ENCODE measurements at regions of chr2 and their contacts with region 1.

Region 1: DNA sequence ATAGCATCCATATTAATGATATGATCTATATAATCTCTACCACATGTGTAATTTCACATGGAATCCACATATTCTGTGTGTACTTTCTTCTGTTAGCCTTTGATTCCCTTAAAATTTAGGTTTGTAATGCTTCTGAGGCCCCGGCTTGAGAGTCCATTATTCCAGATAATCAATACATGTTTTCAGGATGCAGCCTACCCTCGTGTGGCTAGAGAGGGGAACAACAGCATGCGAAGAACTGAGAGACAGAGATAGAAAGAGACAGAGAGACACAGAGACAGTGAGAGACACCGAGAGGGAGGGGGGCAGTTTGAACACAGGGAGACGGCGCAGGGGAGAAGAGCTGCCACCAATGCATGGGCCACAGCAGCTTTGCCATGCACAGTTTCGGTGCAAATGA is 185.4 kb downstream of the SNTG2 start:
- DNase-seq: no peak
- H3K4me3 Mint-ChIP-seq: no peak overlapping the region
- H3K27ac Mint-ChIP-seq: no peak overlapping the region
- H3K4me1 Mint-ChIP-seq: peaks cover 36% of the 10 kb centered on the region
- H3K27me3 Mint-ChIP-seq: no peaks in the 10 kb centered on the region

Region 2: GRCh38 chr2:677056-677965 is 458.7 kb before region 1 on chr2 and contains the start of gene TMEM18:
- CTCF ChIA-PET with region 1: no interaction called
- intact Hi-C with region 1: loop called (anchors 10 kb)
- DNase-seq: peak; percentile 95
- H3K4me3 Mint-ChIP-seq: peak within 1 kb of the TSS; percentile 94
- H3K27ac Mint-ChIP-seq: peak within 1 kb of the TSS; percentile 97
- H3K4me1 Mint-ChIP-seq: peaks cover 44% of the 10 kb centered on the region
- H3K27me3 Mint-ChIP-seq: no peaks in the 10 kb centered on the region
- total RNA-seq, gene TMEM18: 22.4 to 25.1 TPM

Region 3: GRCh38 chr2:854460-854859 is 281.6 kb before region 1 on chr2:
- CTCF ChIA-PET with region 1: no interaction called
- intact Hi-C with region 1: loop called (anchors 2 kb)
- DNase-seq: peak; percentile 73
- H3K4me3 Mint-ChIP-seq: no peak overlapping the region
- H3K27ac Mint-ChIP-seq: no peak overlapping the region
- H3K4me1 Mint-ChIP-seq: peaks cover 19% of the 10 kb centered on the region
- H3K27me3 Mint-ChIP-seq: no peaks in the 10 kb centered on the region

Region 4: GRCh38 chr2:1115843-1116539 is 20.1 kb before region 1 on chr2:
- CTCF ChIA-PET with region 1: no interaction called
- intact Hi-C with region 1: loop called (anchors 2 kb)
- DNase-seq: no peak
- H3K4me3 Mint-ChIP-seq: no peak overlapping the region
- H3K27ac Mint-ChIP-seq: no peak overlapping the region
- H3K4me1 Mint-ChIP-seq: peaks cover 4% of the 10 kb centered on the region
- H3K27me3 Mint-ChIP-seq: no peaks in the 10 kb centered on the region

Region 5: DNA sequence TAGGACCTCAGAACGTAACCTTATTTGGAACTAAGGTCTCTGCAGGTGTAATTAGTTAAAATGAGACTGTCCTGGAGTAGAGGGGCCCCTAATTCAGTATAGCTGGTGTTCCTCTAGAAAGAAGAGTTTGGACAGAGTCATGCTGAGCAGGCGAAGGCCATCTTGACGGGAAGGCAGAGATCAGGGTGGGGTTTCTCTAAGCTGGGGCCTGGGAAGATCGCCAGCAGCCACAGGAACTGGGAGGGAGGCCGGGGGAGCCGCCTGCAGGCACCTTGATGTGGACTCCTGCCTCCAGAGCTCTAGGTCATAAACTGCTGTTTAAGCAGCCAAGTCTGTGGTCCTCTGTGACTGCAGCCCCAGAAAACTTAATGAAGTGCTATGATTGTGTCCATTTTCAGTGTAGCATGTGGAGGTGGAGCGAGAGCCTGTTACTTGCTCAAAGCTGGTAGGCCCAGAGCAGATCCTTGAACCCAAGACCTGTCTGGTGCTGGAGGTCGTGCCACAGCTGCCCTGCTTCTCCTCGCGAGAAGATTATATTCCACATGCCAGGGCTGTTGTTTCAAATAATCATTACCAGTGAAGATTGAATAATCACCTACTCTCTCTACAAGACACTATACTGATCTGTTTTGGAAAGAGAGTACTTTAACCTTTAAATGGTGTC is 382.9 kb after region 1 on chr2:
- CTCF ChIA-PET with region 1: no interaction called
- intact Hi-C with region 1: loop called (anchors 10 kb)
- DNase-seq: peak; percentile 8
- H3K4me3 Mint-ChIP-seq: no peak overlapping the region
- H3K27ac Mint-ChIP-seq: peak overlapping the region; percentile 84
- H3K4me1 Mint-ChIP-seq: peaks cover 23% of the 10 kb centered on the region
- H3K27me3 Mint-ChIP-seq: no peaks in the 10 kb centered on the region